Gastrocnemius medialis (tissue), 4 donors: ENCODE measurements at regions of chr4 and their contacts with region 1.

Region 1: GRCh38 chr4:151408630-151409469 is at the start of gene FHIP1A:
- DNase-seq: peak; percentile 88 to 95
- ATAC-seq: peak; percentile 71 to 82
- H3K4me3 ChIP-seq: peak within 1 kb of the TSS; percentile 73 to 83 (median 80)
- H3K27ac ChIP-seq: peak within 1 kb of the TSS; percentile 94 to 99 (median 98)
- H3K4me1 ChIP-seq: peaks cover 26 to 45% of the 10 kb centered on the region in 2 donors
- H3K27me3 ChIP-seq: no peaks in the 10 kb centered on the region
- CTCF ChIP-seq: peak in 3 of 5 experiments; percentile 6 to 32 (median 31)
- POLR2A ChIP-seq: peak; percentile 68 to 80
- total RNA-seq, gene FHIP1A: 34.7 to 143 (median 78.3) TPM

Region 2: GRCh38 chr4:151459375-151459774 is 50.5 kb after region 1 on chr4:
- in situ Hi-C with region 1: no loop called
- intact Hi-C with region 1: loop called (anchors 2 kb)
- DNase-seq: no peak
- ATAC-seq: no peak
- H3K4me3 ChIP-seq: peak overlapping the region in 1 of 4 donors; percentile 4
- H3K27ac ChIP-seq: peak overlapping the region; percentile 50 to 73 (median 70)
- H3K4me1 ChIP-seq: peaks cover 59 to 78% of the 10 kb centered on the region in 2 donors
- H3K27me3 ChIP-seq: no peaks in the 10 kb centered on the region
- CTCF ChIP-seq: no peak
- POLR2A ChIP-seq: no peak

Region 3: GRCh38 chr4:151530783-151531182 is 121.9 kb after region 1 on chr4:
- in situ Hi-C with region 1: no loop called
- intact Hi-C with region 1: loop called (anchors 5 kb)
- DNase-seq: no peak
- ATAC-seq: no peak
- H3K4me3 ChIP-seq: no peak overlapping the region
- H3K27ac ChIP-seq: peak overlapping the region; percentile 74 to 84 (median 80)
- H3K4me1 ChIP-seq: peaks cover 49 to 52% of the 10 kb centered on the region in 2 donors
- H3K27me3 ChIP-seq: no peaks in the 10 kb centered on the region
- CTCF ChIP-seq: peak in 1 of 5 experiments; percentile 27
- POLR2A ChIP-seq: no peak

Region 4: GRCh38 chr4:151644622-151645021 is 235.8 kb after region 1 on chr4:
- in situ Hi-C with region 1: no loop called
- intact Hi-C with region 1: loop called (anchors 5 kb)
- DNase-seq: no peak
- ATAC-seq: no peak
- H3K4me3 ChIP-seq: no peak overlapping the region
- H3K27ac ChIP-seq: no peak overlapping the region
- H3K4me1 ChIP-seq: peaks cover 19 to 20% of the 10 kb centered on the region in 2 donors
- H3K27me3 ChIP-seq: no peaks in the 10 kb centered on the region
- CTCF ChIP-seq: peak; percentile 13 to 51 (median 34)
- POLR2A ChIP-seq: no peak

Region 5: DNA sequence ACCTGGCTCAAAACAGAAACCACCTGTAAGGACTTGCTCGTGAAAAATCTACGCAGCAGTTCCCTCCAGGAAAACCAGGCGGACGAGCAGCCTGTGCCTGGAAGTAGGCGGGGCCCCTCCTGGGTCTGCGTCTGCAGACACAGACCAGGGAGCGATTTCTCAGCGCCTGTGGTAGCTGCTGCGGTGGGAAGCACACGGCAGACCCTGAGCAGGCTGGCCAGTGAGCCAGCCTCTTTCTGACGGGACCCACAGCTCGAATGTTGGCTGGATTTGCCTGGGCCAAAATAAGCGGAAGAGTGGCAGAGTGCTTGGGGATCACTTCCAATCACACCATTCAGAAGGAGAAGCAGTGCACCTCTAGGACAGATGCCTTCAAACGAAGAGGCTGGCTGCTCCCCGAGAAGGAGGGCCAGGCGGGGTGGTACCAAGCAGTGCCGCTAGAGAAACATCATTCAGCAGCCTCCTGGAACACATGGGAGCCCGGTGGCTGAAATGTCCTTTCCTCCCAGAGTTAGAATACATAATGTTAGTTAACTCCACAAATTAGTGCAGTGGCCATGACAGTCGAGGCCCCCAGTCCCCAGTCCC is 266.0 kb after region 1 on chr4:
- in situ Hi-C with region 1: loop called in 1 of 4 experiments (anchors 25 kb)
- intact Hi-C with region 1: no loop called
- DNase-seq: no peak
- ATAC-seq: no peak
- H3K4me3 ChIP-seq: peak overlapping the region; percentile 17 to 40 (median 26)
- H3K27ac ChIP-seq: peak overlapping the region in 3 of 4 donors; percentile 19 to 95 (median 35)
- H3K4me1 ChIP-seq: peaks cover 27 to 29% of the 10 kb centered on the region in 2 donors
- H3K27me3 ChIP-seq: no peaks in the 10 kb centered on the region
- CTCF ChIP-seq: no peak
- POLR2A ChIP-seq: no peak

Region 6: DNA sequence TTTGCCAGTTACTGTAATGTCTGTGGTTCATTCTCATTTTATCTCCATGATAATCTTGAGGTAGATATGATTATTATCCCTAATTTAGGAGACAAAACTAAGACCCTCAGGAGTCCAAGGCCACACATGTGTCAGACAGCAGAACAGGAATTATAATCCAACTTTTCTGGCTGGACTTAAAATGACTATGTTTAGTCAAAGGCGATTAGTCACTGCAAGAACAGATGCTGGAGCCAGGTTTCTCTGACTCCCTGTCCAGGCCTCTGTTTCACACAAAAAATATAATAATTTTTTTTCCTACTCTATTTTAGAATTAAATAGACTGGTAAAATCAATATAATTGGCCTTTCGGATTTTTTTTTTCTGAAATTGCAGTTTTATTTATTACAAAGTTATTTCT is 2000.6 kb after region 1 on chr4:
- in situ Hi-C with region 1: no loop called
- intact Hi-C with region 1: no loop called
- DNase-seq: no peak
- ATAC-seq: no peak
- H3K4me3 ChIP-seq: no peak overlapping the region
- H3K27ac ChIP-seq: peak overlapping the region in 1 of 4 donors; percentile 4
- H3K4me1 ChIP-seq: peaks cover 8 to 11% of the 10 kb centered on the region in 2 donors
- H3K27me3 ChIP-seq: no peaks in the 10 kb centered on the region
- CTCF ChIP-seq: no peak
- POLR2A ChIP-seq: no peak